Activated CD4-positive, alpha-beta T cell treated with anti-CD3 and anti-CD28 coated beads, Interleukin-2, amount 10 ng/mL, durations not matched to agents 24 days and 14 days (primary cell): ENCODE measurements at regions of chr10 and their contacts with region 1.

Region 1: GRCh38 chr10:9302120-9302746 is 1247.7 kb downstream of the GATA3 start:
- DNase-seq: peak; percentile 74
- H3K4me3 Mint-ChIP-seq: no peak overlapping the region
- H3K27ac Mint-ChIP-seq: no peak overlapping the region
- H3K4me1 Mint-ChIP-seq: peaks cover 1% of the 10 kb centered on the region
- H3K27me3 Mint-ChIP-seq: peaks cover 7% of the 10 kb centered on the region

Region 2: GRCh38 chr10:7525314-7526016 is 1776.8 kb before region 1 on chr10:
- intact Hi-C with region 1: loop called (anchors 1 kb)
- DNase-seq: peak; percentile 91
- H3K4me3 Mint-ChIP-seq: no peak overlapping the region
- H3K27ac Mint-ChIP-seq: no peak overlapping the region
- H3K4me1 Mint-ChIP-seq: peaks cover 20% of the 10 kb centered on the region
- H3K27me3 Mint-ChIP-seq: peaks cover 18% of the 10 kb centered on the region

Region 3: GRCh38 chr10:7687228-7687907 is 1614.9 kb before region 1 on chr10:
- intact Hi-C with region 1: loop called (anchors 5 kb)
- DNase-seq: peak; percentile 93
- H3K4me3 Mint-ChIP-seq: no peak overlapping the region
- H3K27ac Mint-ChIP-seq: no peak overlapping the region
- H3K4me1 Mint-ChIP-seq: peaks cover 10% of the 10 kb centered on the region
- H3K27me3 Mint-ChIP-seq: peaks cover 15% of the 10 kb centered on the region

Region 4: GRCh38 chr10:7872041-7872442 is 1430.2 kb before region 1 on chr10:
- intact Hi-C with region 1: loop called (anchors 1 kb)
- DNase-seq: no peak
- H3K4me3 Mint-ChIP-seq: peak overlapping the region; percentile 63
- H3K27ac Mint-ChIP-seq: no peak overlapping the region
- H3K4me1 Mint-ChIP-seq: peaks cover 7% of the 10 kb centered on the region
- H3K27me3 Mint-ChIP-seq: no peaks in the 10 kb centered on the region

Region 5: GRCh38 chr10:8044908-8045725 is 1257.1 kb before region 1 on chr10:
- intact Hi-C with region 1: loop called (anchors 10 kb)
- DNase-seq: peak; percentile 68
- H3K4me3 Mint-ChIP-seq: peak overlapping the region; percentile 57
- H3K27ac Mint-ChIP-seq: peak overlapping the region; percentile 6
- H3K4me1 Mint-ChIP-seq: peaks cover 37% of the 10 kb centered on the region
- H3K27me3 Mint-ChIP-seq: peaks cover 83% of the 10 kb centered on the region

Region 6: GRCh38 chr10:8998751-8999150 is 303.5 kb before region 1 on chr10:
- intact Hi-C with region 1: loop called (anchors 10 kb)
- DNase-seq: no peak
- H3K4me3 Mint-ChIP-seq: no peak overlapping the region
- H3K27ac Mint-ChIP-seq: no peak overlapping the region
- H3K4me1 Mint-ChIP-seq: peaks cover 3% of the 10 kb centered on the region
- H3K27me3 Mint-ChIP-seq: no peaks in the 10 kb centered on the region

Region 7: GRCh38 chr10:9209105-9209798 is 93.0 kb before region 1 on chr10:
- intact Hi-C with region 1: loop called (anchors 2 kb)
- DNase-seq: peak; percentile 90
- H3K4me3 Mint-ChIP-seq: no peak overlapping the region
- H3K27ac Mint-ChIP-seq: no peak overlapping the region
- H3K4me1 Mint-ChIP-seq: peaks cover 3% of the 10 kb centered on the region
- H3K27me3 Mint-ChIP-seq: peaks cover 17% of the 10 kb centered on the region

Region 8: DNA sequence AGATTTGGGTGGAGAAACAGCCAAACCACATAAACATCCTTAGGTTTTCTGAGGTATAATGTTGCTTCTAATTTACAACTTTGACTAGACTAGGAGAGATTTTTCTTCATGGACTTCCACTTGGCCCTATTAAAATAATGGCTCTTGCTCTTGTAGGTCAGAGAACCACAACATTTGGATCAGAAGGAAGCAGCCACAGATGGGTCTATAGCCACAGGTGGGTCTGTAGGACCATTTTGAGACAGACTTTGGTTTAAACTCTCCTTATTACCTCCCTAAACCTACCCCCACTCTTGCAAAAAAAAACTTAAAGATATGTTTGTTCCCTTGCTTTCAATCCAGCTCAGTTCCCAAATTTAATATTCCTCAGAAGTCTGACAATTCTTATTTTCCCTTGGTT is 13.1 kb after region 1 on chr10:
- intact Hi-C with region 1: no loop called
- DNase-seq: no peak
- H3K4me3 Mint-ChIP-seq: no peak overlapping the region
- H3K27ac Mint-ChIP-seq: no peak overlapping the region
- H3K4me1 Mint-ChIP-seq: no peaks in the 10 kb centered on the region
- H3K27me3 Mint-ChIP-seq: peaks cover 13% of the 10 kb centered on the region